ENCODE measurements at regions of chr4 and their contacts with region 1.

Region 1: GRCh38 chr4:39181905-39182638 is at the start of gene WDR19:
- DNase-seq: peak; percentile 98 to 99 (median 99)
- ATAC-seq: peak; percentile 100
- H3K4me3 ChIP-seq: peak within 1 kb of the TSS; percentile 58 to 89 (median 76)
- H3K27ac ChIP-seq: peak within 1 kb of the TSS in 11 of 12 donors; percentile 32 to 79 (median 64)
- H3K4me1 ChIP-seq: peaks cover 0 to 16% (median 5%) of the 10 kb centered on the region in 12 donors
- H3K27me3 ChIP-seq: no peaks in the 10 kb centered on the region
- CTCF ChIP-seq: peak; percentile 20 to 73 (median 48)
- POLR2A ChIP-seq: peak in 1 of 2 donors; percentile 63
- total RNA-seq, gene WDR19: 4.3 to 15.6 (median 8.1) TPM

Region 2: GRCh38 chr4:38055566-38055965 is 1126.5 kb before region 1 on chr4:
- intact Hi-C with region 1: loop called in 1 of 10 experiments (anchors 5 kb)
- DNase-seq: no peak
- ATAC-seq: peak; percentile 18 to 51 (median 26)
- H3K4me3 ChIP-seq: peak overlapping the region in 5 of 12 donors; percentile 6 to 15 (median 8)
- H3K27ac ChIP-seq: peak overlapping the region in 11 of 12 donors; percentile 18 to 82 (median 72)
- H3K4me1 ChIP-seq: peaks cover 0 to 39% (median 25%) of the 10 kb centered on the region in 12 donors
- H3K27me3 ChIP-seq: no peaks in the 10 kb centered on the region
- CTCF ChIP-seq: peak in 4 of 12 donors; percentile 7 to 26 (median 14)
- POLR2A ChIP-seq: no peak

Region 3: GRCh38 chr4:38902695-38903094 is 279.4 kb before region 1 on chr4:
- intact Hi-C with region 1: loop called in 1 of 10 experiments (anchors 2 kb)
- DNase-seq: no peak
- ATAC-seq: peak in 2 of 4 donors; percentile 65 to 69
- H3K4me3 ChIP-seq: no peak overlapping the region
- H3K27ac ChIP-seq: no peak overlapping the region
- H3K4me1 ChIP-seq: peaks cover 0 to 20% (median 1%) of the 10 kb centered on the region in 12 donors
- H3K27me3 ChIP-seq: no peaks in the 10 kb centered on the region
- CTCF ChIP-seq: peak in 11 of 12 donors; percentile 11 to 56 (median 38)
- POLR2A ChIP-seq: no peak

Region 4: GRCh38 chr4:38980903-38981676 is 201.0 kb before region 1 on chr4:
- intact Hi-C with region 1: no loop called
- DNase-seq: no peak
- ATAC-seq: no peak
- H3K4me3 ChIP-seq: no peak overlapping the region
- H3K27ac ChIP-seq: no peak overlapping the region
- H3K4me1 ChIP-seq: peaks cover 0 to 1% (median 0%) of the 10 kb centered on the region in 12 donors
- H3K27me3 ChIP-seq: no peaks in the 10 kb centered on the region
- CTCF ChIP-seq: no peak
- POLR2A ChIP-seq: no peak

Region 5: DNA sequence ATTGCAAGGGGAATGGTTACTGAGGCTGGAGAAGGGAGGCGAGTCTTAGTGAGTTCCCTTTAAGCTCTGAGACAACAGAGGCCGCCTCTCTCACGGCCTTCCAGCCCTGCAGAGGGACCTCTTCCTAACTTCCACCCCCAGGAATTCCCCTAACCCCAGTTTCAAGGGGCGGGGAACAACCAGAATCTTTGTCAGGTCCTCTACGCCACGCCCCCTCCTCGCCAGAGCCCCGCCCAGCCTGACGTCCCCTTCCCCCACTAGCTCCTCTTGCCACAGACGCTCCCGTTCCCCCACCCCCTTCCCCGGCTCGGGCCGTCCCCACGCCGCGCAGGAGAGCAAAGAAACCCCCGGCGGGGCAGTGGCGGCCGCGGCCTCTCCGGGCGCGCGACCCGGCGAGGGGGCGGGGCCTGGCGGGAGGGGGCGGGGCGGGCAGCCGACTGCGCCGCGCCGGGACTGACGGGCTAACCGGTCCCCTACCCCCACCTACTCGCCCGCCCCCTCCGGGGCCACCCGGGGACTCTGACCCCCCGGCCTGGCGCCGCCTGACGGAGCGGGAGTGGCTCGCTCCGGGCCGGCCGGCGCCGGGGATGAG is 137.6 kb before region 1 on chr4:
- intact Hi-C with region 1: loop called in 2 of 10 experiments (anchors 5 kb)
- DNase-seq: peak; percentile 94 to 96 (median 95)
- ATAC-seq: peak; percentile 89 to 95 (median 93)
- H3K4me3 ChIP-seq: peak overlapping the region; percentile 49 to 94 (median 77)
- H3K27ac ChIP-seq: peak overlapping the region; percentile 81 to 97 (median 93)
- H3K4me1 ChIP-seq: peaks cover 0 to 56% (median 20%) of the 10 kb centered on the region in 12 donors
- H3K27me3 ChIP-seq: no peaks in the 10 kb centered on the region
- CTCF ChIP-seq: no peak
- POLR2A ChIP-seq: peak in 1 of 2 donors; percentile 21

Region 6: GRCh38 chr4:39365830-39366771 is 184.0 kb after region 1 on chr4 and contains the start of gene RFC1:
- intact Hi-C with region 1: loop called in 1 of 10 experiments (anchors 5 kb)
- DNase-seq: peak; percentile 90 to 95 (median 93)
- ATAC-seq: peak; percentile 65 to 97 (median 96)
- H3K4me3 ChIP-seq: peak within 1 kb of the TSS; percentile 68 to 98 (median 86)
- H3K27ac ChIP-seq: peak within 1 kb of the TSS in 11 of 12 donors; percentile 32 to 89 (median 68)
- H3K4me1 ChIP-seq: peaks cover 0 to 28% (median 15%) of the 10 kb centered on the region in 12 donors
- H3K27me3 ChIP-seq: no peaks in the 10 kb centered on the region
- CTCF ChIP-seq: no peak
- POLR2A ChIP-seq: no peak
- total RNA-seq, gene RFC1: 21.0 to 31.2 (median 24.3) TPM